PC-3 (cell line): ENCODE measurements at regions of chr14 and their contacts with region 1.

Region 1: DNA sequence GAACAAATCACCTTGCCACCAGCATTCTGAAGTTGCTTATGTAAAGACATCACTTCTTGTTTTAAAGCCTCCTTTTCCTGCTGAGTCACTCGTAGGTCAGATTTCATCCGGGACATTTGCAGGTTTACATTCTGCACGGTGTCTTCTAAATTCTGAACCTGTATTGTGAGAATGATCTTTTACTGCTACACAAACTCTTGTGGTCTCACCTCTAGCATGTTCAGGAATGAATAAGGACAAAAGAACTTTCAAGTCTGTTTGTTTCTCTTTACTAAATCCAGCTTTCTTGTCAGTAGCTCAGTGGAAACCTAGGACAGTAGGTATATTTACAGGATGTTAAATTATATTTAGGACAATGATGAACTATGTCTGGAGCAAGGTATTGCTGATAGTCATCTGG is 73.5 kb upstream of the SAV1 start:
- DNase-seq: peak; percentile 95
- ATAC-seq: peak; percentile 93
- H3K4me3 ChIP-seq: peak overlapping the region; percentile 6; the same call in 1 of the 2 replicates
- H3K27ac ChIP-seq: peak overlapping the region; percentile 83
- H3K4me1 ChIP-seq: peaks cover 18% of the 10 kb centered on the region
- H3K27me3 ChIP-seq: no peaks in the 10 kb centered on the region
- CTCF ChIP-seq: no peak

Region 2: DNA sequence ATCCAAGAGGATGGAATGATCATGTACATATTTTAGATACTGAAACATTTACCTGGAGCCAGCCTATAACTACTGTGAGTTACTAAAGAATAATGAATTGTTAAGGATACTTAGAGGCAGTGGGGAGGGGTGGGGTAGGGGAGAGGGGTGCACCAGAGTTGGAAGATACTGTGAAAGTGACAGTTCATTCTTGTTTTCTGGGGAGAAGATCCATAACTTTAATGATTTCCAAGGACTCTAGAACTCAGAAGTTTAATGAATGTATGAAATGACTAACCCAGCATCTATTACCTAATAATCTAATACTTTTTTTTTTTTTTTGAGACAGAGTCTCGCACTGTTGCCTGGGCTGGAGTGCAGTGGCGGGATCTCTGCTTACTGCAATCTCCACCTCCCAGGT is 963.1 kb before region 1 on chr14:
- CTCF ChIA-PET with region 1: no interaction called
- POLR2A ChIA-PET with region 1: interaction called, 15 read pairs
- intact Hi-C with region 1: no loop called
- DNase-seq: no peak
- ATAC-seq: no peak
- H3K4me3 ChIP-seq: no peak overlapping the region
- H3K27ac ChIP-seq: no peak overlapping the region
- H3K4me1 ChIP-seq: no peaks in the 10 kb centered on the region
- H3K27me3 ChIP-seq: no peaks in the 10 kb centered on the region
- CTCF ChIP-seq: no peak

Region 3: DNA sequence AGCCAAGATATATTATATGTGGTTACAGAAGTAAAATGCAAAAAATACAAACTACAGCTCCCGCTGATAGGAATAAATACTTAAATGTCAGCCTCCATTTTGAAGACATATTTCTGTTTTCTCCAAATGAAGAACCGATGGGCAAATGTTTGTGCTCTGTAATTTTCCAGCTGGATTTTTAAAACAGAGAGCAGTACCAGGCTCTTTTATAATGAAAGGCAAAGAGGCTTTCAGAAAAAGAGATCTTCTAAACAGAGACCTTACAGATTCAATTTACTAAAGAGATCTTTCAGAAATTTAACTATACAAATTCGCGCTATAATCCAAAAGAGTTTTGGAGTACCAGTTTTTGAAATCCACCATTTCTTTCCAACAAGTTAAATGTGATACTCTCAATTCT is 229.1 kb before region 1 on chr14:
- CTCF ChIA-PET with region 1: no interaction called
- POLR2A ChIA-PET with region 1: interaction called, 10 read pairs
- intact Hi-C with region 1: no loop called
- DNase-seq: no peak
- ATAC-seq: no peak
- H3K4me3 ChIP-seq: no peak overlapping the region
- H3K27ac ChIP-seq: no peak overlapping the region
- H3K4me1 ChIP-seq: no peaks in the 10 kb centered on the region
- H3K27me3 ChIP-seq: no peaks in the 10 kb centered on the region
- CTCF ChIP-seq: no peak